Mucosa of descending colon (tissue), 3 donors: ENCODE measurements at regions of chr1 and their contacts with region 1.

Region 1: DNA sequence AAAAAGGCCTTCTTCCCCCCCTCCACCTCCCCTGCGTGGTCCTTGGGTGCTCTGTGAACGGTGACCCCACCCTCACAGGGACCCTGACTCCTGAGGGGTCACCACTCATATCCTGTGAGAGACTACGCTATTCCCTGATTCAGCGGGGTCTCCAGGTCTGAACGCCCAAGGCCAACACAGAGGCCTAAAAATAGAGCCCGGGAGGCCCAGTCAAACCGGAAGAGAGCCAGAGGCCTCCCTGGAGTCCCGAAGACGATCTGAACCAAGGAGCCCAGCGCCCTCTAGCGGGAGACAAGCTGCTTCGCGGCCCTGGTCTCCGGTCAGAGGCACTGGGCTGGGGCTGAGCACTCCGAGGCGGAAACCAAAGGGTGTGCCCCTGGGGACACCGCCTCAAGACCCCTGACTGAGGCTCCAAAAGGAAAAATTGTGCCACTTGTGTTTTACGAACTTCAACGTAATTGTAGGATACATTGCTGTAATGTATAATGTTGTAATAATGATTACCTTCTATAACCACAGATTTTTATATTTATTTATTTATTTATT is 42.4 kb upstream of the PSEN2 start:
- DNase-seq: peak; percentile 94 to 96 (median 95)
- ATAC-seq: peak; percentile 100
- H3K4me3 ChIP-seq: no peak overlapping the region
- H3K4me1 ChIP-seq: peaks cover 3% of the 10 kb centered on the region
- CTCF ChIP-seq: peak; percentile 95

Region 2: GRCh38 chr1:226547754-226548191 is 280.3 kb before region 1 on chr1:
- intact Hi-C with region 1: loop called (anchors 10 kb)
- DNase-seq: peak; percentile 74 to 90 (median 83)
- ATAC-seq: peak; percentile 73
- H3K4me3 ChIP-seq: no peak overlapping the region
- H3K4me1 ChIP-seq: peaks cover 36% of the 10 kb centered on the region
- CTCF ChIP-seq: peak; percentile 55

Region 3: GRCh38 chr1:226634166-226634588 is 193.9 kb before region 1 on chr1:
- intact Hi-C with region 1: loop called (anchors 5 kb)
- DNase-seq: peak; percentile 86 to 93 (median 87)
- ATAC-seq: peak; percentile 85
- H3K4me3 ChIP-seq: no peak overlapping the region
- H3K4me1 ChIP-seq: no peaks in the 10 kb centered on the region
- CTCF ChIP-seq: peak; percentile 79

Region 4: DNA sequence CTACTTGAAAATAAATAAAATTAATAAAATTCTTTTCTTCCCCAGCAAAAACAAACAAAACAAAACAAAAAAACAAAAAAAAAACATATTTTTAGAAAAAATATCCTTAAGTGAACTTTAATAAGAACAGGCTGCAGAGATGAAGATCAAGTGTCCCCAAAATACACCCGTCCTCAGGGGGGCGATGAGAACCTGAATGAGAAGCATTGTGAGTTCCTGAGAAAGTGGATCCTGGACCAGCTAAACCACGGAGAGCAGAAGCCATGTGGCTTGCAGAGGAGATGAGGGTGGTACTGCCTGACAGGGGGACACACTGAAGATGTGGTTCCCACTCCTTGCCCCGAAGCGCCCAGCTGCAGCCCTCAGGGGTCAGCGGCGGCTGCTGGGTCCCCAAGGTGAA is 178.3 kb before region 1 on chr1:
- intact Hi-C with region 1: loop called in 1 of 2 experiments (anchors 5 kb)
- DNase-seq: peak in 1 of 3 donors; percentile 29
- ATAC-seq: no peak
- H3K4me3 ChIP-seq: no peak overlapping the region
- H3K4me1 ChIP-seq: peaks cover 4% of the 10 kb centered on the region
- CTCF ChIP-seq: no peak

Region 5: GRCh38 chr1:226736908-226737818 is 90.9 kb before region 1 on chr1:
- intact Hi-C with region 1: loop called in 1 of 2 experiments (anchors 10 kb)
- DNase-seq: peak; percentile 51 to 69 (median 57)
- ATAC-seq: peak; percentile 46
- H3K4me3 ChIP-seq: peak overlapping the region; percentile 57
- H3K4me1 ChIP-seq: peaks cover 14% of the 10 kb centered on the region
- CTCF ChIP-seq: no peak